OCI-LY7 (cell line): ENCODE measurements at regions of chrX and their contacts with region 1.

Region 1: GRCh38 chrX:30713061-30713525 is 59.9 kb downstream of the GK start:
- DNase-seq: peak; percentile 46
- H3K4me3 ChIP-seq: no peak overlapping the region
- H3K27ac ChIP-seq: no peak overlapping the region
- H3K4me1 ChIP-seq: no peaks in the 10 kb centered on the region
- CTCF ChIP-seq: peak; percentile 77

Region 2: GRCh38 chrX:30635630-30636029 is 77.5 kb before region 1 on chrX:
- CTCF ChIA-PET with region 1: no interaction called
- POLR2A ChIA-PET with region 1: interaction called, 3 read pairs
- intact Hi-C with region 1: loop called (anchors 1 kb)
- DNase-seq: peak; percentile 18
- H3K4me3 ChIP-seq: no peak overlapping the region
- H3K27ac ChIP-seq: no peak overlapping the region
- H3K4me1 ChIP-seq: no peaks in the 10 kb centered on the region
- CTCF ChIP-seq: peak; percentile 67

Region 3: GRCh38 chrX:30822068-30822681 is 109.1 kb after region 1 on chrX:
- CTCF ChIA-PET with region 1: no interaction called
- POLR2A ChIA-PET with region 1: no interaction called
- intact Hi-C with region 1: no loop called
- DNase-seq: peak; percentile 51
- H3K4me3 ChIP-seq: no peak overlapping the region
- H3K27ac ChIP-seq: peak overlapping the region; percentile 43
- H3K4me1 ChIP-seq: peaks cover 22% of the 10 kb centered on the region
- CTCF ChIP-seq: peak; percentile 51